AG04450 (cell line): ENCODE measurements at regions of chr1 and their contacts with region 1.

Region 1: GRCh38 chr1:162847839-162848453 is 13.0 kb downstream of the CCDC190 start:
- DNase-seq: peak; percentile 67
- H3K4me3 ChIP-seq: no peak overlapping the region
- H3K27ac ChIP-seq: no peak overlapping the region
- H3K27me3 ChIP-seq: no peaks in the 10 kb centered on the region
- CTCF ChIP-seq: peak; percentile 91

Region 2: DNA sequence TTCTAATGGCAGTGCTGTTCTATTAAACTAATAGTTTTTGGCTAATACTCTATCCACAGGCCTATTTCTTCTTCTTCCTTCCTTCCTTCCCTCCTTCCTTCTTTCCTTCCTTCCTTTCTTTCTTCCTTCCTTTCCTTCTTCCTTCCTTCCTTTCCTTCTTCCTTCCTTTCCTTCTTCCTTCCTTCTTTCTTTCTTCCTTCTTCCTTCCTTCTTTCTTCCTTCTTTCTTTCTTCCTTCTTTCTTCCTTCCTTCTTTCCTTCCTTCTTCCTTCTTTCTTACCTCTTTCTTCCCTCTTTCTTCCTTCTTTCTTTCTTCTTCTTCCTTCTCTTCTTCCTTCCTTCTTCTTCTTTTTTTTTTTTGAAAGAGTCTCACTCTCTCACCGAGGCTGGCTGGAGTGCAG is 18.7 kb before region 1 on chr1:
- CTCF ChIA-PET with region 1: interaction called, 14 read pairs
- POLR2A ChIA-PET with region 1: no interaction called
- DNase-seq: no peak
- H3K4me3 ChIP-seq: no peak overlapping the region
- H3K27ac ChIP-seq: no peak overlapping the region
- H3K27me3 ChIP-seq: peaks cover 11% of the 10 kb centered on the region
- CTCF ChIP-seq: no peak

Region 3: GRCh38 chr1:162878000-162878596 is 30.2 kb after region 1 on chr1:
- CTCF ChIA-PET with region 1: interaction called, 28 read pairs
- POLR2A ChIA-PET with region 1: interaction called, 6 read pairs
- DNase-seq: peak; percentile 38
- H3K4me3 ChIP-seq: no peak overlapping the region
- H3K27ac ChIP-seq: no peak overlapping the region
- H3K27me3 ChIP-seq: no peaks in the 10 kb centered on the region
- CTCF ChIP-seq: peak; percentile 84

Region 4: GRCh38 chr1:163195728-163196448 is 347.9 kb after region 1 on chr1:
- CTCF ChIA-PET with region 1: interaction called, 11 read pairs
- POLR2A ChIA-PET with region 1: no interaction called
- DNase-seq: no peak
- H3K4me3 ChIP-seq: no peak overlapping the region
- H3K27ac ChIP-seq: no peak overlapping the region
- H3K27me3 ChIP-seq: no peaks in the 10 kb centered on the region
- CTCF ChIP-seq: no peak

Region 5: DNA sequence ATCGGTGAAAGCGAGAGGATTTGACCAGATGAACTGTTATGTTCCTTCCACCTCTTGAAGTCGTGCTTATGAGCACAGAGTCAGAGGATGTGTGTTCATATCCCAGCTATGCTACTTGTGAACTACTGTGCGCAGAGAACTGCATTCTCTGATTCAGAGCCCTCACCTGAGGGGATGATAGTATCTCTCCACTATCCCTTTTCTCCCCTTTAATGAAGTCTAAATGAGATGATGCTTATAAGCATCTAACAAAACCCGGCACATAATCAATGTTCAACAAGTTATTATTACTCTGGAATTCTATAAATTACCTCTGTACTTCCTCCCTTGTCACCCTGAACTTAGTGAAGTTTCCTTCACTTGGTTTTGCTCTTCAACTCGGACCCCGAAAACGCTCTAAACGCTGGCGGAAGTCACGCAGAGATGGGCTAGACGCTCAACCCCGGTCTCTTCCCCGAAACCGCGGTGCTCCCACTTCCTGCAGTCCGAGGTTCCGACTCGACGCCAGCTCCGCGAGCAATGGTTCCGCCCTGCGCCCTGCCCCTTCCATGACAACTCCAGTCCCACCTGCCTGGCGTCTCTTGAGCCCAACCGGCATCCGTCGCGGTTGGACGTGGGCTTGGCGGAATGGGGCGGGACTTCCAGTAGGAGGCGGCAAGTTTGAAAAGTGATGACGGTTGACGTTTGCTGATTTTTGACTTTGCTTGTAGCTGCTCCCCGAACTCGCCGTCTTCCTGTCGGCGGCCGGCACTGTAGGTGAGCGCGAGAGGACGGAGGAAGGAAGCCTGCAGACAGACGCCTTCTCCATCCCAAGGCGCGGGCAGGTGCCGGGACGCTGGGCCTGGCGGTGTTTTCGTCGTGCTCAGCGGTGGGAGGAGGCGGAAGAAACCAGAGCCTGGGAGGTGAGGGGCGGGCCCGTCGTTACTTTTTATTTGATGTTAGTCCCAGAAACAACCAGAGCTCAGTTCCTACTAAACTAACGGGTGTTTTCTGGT is 473.7 kb after region 1 on chr1 and contains the start of gene NUF2:
- CTCF ChIA-PET with region 1: interaction called, 106 read pairs
- POLR2A ChIA-PET with region 1: no interaction called
- DNase-seq: peak; percentile 99
- H3K4me3 ChIP-seq: peak within 1 kb of the TSS; percentile 84
- H3K27ac ChIP-seq: peak within 1 kb of the TSS; percentile 58
- H3K27me3 ChIP-seq: no peaks in the 10 kb centered on the region
- CTCF ChIP-seq: no peak
- polyA plus RNA-seq, gene NUF2: 4.2 and 8.1 TPM in 2 replicates